ENCODE measurements at regions of chr9 and their contacts with region 1.

Region 1: DNA sequence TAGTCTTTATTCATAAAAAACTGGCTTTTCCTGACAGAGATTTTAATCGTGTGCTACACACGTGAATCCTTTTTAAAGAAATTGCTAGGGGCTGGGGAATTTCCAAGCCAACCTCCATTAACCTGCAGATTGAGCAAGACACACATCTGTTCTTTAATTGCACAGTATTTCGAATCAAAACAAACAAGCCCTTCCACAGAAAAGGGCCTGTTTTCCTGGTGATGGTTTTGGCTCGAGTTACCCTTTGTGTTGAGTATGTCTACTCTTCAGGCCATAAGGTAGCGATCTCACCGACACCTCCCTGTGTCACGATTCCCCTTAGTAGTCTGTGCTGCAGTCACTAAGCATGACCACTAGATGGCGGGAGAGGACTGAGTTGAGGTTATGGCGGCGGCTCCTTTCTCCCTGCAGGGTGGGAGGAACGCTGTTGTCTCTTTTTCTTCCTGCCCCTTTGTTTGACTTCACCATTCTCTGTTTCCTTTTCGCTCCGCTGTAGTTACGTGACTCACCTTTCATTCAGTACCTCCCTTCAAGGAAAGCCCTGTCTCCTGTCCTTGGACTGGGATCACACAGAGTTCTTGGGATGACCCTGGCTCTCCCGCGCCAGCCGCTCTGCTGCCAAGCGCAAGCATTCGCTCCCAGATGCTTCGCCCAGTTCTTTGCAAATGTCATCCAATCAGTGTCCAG is 137.1 kb upstream of the SLC24A2 start:
- DNase-seq: peak; percentile 86
- H3K4me3 Mint-ChIP-seq: peak overlapping the region; percentile 50
- H3K27ac Mint-ChIP-seq: no peak overlapping the region
- H3K4me1 Mint-ChIP-seq: peaks cover 15% of the 10 kb centered on the region
- H3K27me3 Mint-ChIP-seq: peaks cover 12% of the 10 kb centered on the region

Region 2: DNA sequence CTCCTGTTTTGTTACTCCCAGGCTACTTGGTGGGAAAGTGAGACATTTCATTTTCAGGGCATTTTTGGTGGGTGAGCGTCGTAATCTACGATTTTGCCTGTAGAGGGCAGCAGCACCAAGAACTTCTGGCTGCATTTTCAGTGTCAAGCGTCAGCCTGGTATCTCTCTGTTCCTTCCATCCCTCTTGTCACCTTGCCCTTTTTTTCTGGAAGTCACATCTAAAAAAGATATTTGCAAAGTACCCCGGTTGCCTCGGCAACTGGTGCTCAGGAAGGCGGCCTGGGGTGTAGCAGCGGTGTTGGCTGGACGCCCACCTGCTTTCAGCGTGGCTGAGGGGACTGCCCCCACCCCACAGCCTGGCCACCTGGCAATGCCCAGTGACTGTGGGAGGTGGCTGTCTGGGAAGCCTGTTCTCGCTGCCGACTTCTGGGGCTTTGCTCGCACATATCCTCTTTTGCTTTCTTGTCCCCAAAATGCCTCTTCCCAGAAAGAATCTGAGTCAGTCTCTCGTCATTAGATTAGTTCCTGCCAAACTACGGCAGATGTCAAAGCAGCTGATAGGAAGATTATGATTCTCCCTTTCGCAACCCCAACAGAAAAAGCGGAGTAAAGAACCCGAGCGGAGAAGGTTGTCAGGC is 432.7 kb before region 1 on chr9:
- CTCF ChIA-PET with region 1: interaction called, 3 read pairs
- POLR2A ChIA-PET with region 1: no interaction called
- intact Hi-C with region 1: loop called (anchors 2 kb)
- DNase-seq: peak; percentile 61
- H3K4me3 Mint-ChIP-seq: peak overlapping the region; percentile 48
- H3K27ac Mint-ChIP-seq: no peak overlapping the region
- H3K4me1 Mint-ChIP-seq: peaks cover 17% of the 10 kb centered on the region
- H3K27me3 Mint-ChIP-seq: no peaks in the 10 kb centered on the region

Region 3: DNA sequence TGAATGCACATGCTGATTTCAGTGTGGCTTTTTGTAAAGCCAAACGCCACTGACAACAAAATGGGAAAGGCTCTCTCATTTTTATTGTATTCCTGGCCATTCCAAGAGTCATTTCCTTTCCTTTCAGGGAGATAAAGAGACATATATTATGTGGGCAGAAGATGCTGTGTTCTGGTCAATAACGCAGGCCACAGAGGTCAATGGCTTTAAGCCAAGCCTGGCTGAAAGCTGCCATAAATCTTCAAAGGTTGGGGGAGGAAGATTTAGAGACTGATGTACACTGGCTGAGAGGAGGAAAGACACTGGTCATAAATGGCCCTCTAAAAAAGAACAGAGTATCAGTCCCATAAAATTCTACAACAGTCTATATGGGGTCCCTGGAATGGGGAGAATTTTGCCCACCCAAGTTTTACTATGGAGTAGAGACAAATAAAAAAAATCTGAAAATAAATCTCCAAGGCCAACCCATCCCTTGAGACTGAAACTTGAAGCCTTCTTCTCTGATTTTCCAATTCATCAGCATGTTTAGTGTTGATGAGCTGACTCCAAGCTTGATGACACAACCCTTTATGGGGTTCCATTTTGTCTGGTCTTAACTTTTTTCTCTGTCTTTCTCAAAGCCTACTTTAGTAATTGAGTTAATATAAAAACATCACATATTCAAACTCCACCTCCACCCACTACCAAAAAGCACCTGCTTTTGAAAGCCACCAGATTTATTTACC is 15.0 kb after region 1 on chr9:
- CTCF ChIA-PET with region 1: no interaction called
- POLR2A ChIA-PET with region 1: no interaction called
- intact Hi-C with region 1: no loop called
- DNase-seq: no peak
- H3K4me3 Mint-ChIP-seq: no peak overlapping the region
- H3K27ac Mint-ChIP-seq: no peak overlapping the region
- H3K4me1 Mint-ChIP-seq: no peaks in the 10 kb centered on the region
- H3K27me3 Mint-ChIP-seq: peaks cover 5% of the 10 kb centered on the region

Region 4: DNA sequence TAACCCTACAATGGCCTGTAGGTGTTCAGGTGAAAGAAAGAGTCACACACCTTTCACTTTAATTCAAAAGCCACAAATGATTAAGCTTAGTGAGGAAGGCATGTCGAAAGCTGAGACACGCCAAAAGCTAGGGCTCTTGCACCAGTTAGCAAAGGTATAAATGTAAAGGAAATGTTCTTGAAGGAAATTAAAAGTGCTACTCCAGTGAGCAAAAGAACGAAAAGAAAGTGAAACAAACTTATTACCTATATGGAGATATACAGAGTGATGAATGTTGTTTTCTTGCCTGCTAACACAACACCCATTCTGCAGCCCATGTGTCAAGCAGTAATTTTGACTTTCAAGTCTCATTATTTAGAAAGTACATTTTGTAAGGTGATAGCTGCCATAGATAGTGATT is 117.1 kb after region 1 on chr9:
- CTCF ChIA-PET with region 1: no interaction called
- POLR2A ChIA-PET with region 1: no interaction called
- intact Hi-C with region 1: loop called (anchors 2 kb)
- DNase-seq: peak; percentile 23
- H3K4me3 Mint-ChIP-seq: peak overlapping the region; percentile 53
- H3K27ac Mint-ChIP-seq: peak overlapping the region; percentile 70
- H3K4me1 Mint-ChIP-seq: peaks cover 30% of the 10 kb centered on the region
- H3K27me3 Mint-ChIP-seq: no peaks in the 10 kb centered on the region

Region 5: GRCh38 chr9:20256284-20256948 is 330.5 kb after region 1 on chr9:
- CTCF ChIA-PET with region 1: no interaction called
- POLR2A ChIA-PET with region 1: no interaction called
- intact Hi-C with region 1: loop called (anchors 2 kb)
- DNase-seq: no peak
- H3K4me3 Mint-ChIP-seq: no peak overlapping the region
- H3K27ac Mint-ChIP-seq: no peak overlapping the region
- H3K4me1 Mint-ChIP-seq: peaks cover 32% of the 10 kb centered on the region
- H3K27me3 Mint-ChIP-seq: no peaks in the 10 kb centered on the region

Region 6: GRCh38 chr9:20558566-20559016 is 632.6 kb after region 1 on chr9:
- CTCF ChIA-PET with region 1: no interaction called
- POLR2A ChIA-PET with region 1: no interaction called
- intact Hi-C with region 1: loop called (anchors 1 kb)
- DNase-seq: peak; percentile 60
- H3K4me3 Mint-ChIP-seq: no peak overlapping the region
- H3K27ac Mint-ChIP-seq: peak overlapping the region; percentile 65
- H3K4me1 Mint-ChIP-seq: peaks cover 86% of the 10 kb centered on the region
- H3K27me3 Mint-ChIP-seq: no peaks in the 10 kb centered on the region

Region 7: DNA sequence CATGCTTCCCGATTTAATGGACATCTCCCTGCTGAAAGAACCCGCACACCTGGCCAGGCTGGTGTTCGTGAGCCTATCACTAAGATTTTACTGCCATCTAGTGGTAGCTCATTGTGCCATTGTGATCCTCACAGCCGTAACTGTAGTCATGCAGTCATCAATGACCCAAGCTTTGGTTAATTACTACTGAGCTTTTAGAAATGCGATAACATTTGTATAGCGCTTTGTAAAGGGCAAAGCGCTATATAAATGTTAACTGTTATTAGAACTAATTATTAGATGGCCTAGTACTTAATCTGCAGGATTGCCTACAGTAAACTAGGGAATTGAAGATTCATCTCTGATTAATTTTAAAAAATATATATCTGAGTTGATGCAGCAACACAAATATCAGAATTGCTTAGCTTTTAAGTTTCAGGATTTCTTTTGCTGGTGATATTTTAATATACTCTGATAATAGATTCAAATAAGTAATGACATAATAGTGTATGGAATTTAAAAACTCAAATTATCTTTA is 1015.3 kb after region 1 on chr9:
- CTCF ChIA-PET with region 1: interaction called, 9 read pairs
- POLR2A ChIA-PET with region 1: no interaction called
- intact Hi-C with region 1: loop called (anchors 1 kb)
- DNase-seq: peak; percentile 60
- H3K4me3 Mint-ChIP-seq: no peak overlapping the region
- H3K27ac Mint-ChIP-seq: no peak overlapping the region
- H3K4me1 Mint-ChIP-seq: peaks cover 3% of the 10 kb centered on the region
- H3K27me3 Mint-ChIP-seq: no peaks in the 10 kb centered on the region